ENCODE measurements at regions of chr11 and their contacts with region 1.

Region 1: GRCh38 chr11:17770048-17770652 is 35.6 kb downstream of the KCNC1 start:
- DNase-seq: peak; percentile 49
- ATAC-seq: peak; percentile 29
- H3K4me3 Mint-ChIP-seq: no peak overlapping the region
- H3K27ac Mint-ChIP-seq: peak overlapping the region; percentile 38; the same call in 1 of the 2 replicates
- H3K4me1 Mint-ChIP-seq: peaks cover 4% of the 10 kb centered on the region; the same call in 1 of the 2 replicates
- H3K27me3 Mint-ChIP-seq: no peaks in the 10 kb centered on the region
- CTCF ChIP-seq: no peak

Region 2: GRCh38 chr11:17695454-17696441 is 74.4 kb before region 1 on chr11:
- CTCF ChIA-PET with region 1: no interaction called
- POLR2A ChIA-PET with region 1: no interaction called
- DNase-seq: peak; percentile 31
- ATAC-seq: peak; percentile 77
- H3K4me3 Mint-ChIP-seq: peak overlapping the region; percentile 67
- H3K27ac Mint-ChIP-seq: no peak overlapping the region
- H3K4me1 Mint-ChIP-seq: peaks cover 4% of the 10 kb centered on the region; the same call in 1 of the 2 replicates
- H3K27me3 Mint-ChIP-seq: peaks cover 59% of the 10 kb centered on the region
- CTCF ChIP-seq: no peak

Region 3: GRCh38 chr11:17736930-17737817 is 33.0 kb before region 1 on chr11:
- CTCF ChIA-PET with region 1: interaction called, 24 read pairs
- POLR2A ChIA-PET with region 1: no interaction called
- DNase-seq: no peak
- ATAC-seq: no peak
- H3K4me3 Mint-ChIP-seq: no peak overlapping the region
- H3K27ac Mint-ChIP-seq: no peak overlapping the region
- H3K4me1 Mint-ChIP-seq: peaks cover 11% of the 10 kb centered on the region
- H3K27me3 Mint-ChIP-seq: peaks cover 24% of the 10 kb centered on the region
- CTCF ChIP-seq: no peak

Region 4: GRCh38 chr11:17781221-17781620 is 11.1 kb after region 1 on chr11:
- CTCF ChIA-PET with region 1: interaction called, 48 read pairs
- POLR2A ChIA-PET with region 1: no interaction called
- DNase-seq: no peak
- ATAC-seq: no peak; the same call in 1 of the 2 replicates
- H3K4me3 Mint-ChIP-seq: no peak overlapping the region
- H3K27ac Mint-ChIP-seq: no peak overlapping the region
- H3K4me1 Mint-ChIP-seq: no peaks in the 10 kb centered on the region
- H3K27me3 Mint-ChIP-seq: no peaks in the 10 kb centered on the region
- CTCF ChIP-seq: no peak

Region 5: GRCh38 chr11:17827006-17827405 is 56.9 kb after region 1 on chr11:
- CTCF ChIA-PET with region 1: interaction called, 44 read pairs
- POLR2A ChIA-PET with region 1: interaction called, 3 read pairs
- DNase-seq: no peak
- ATAC-seq: peak; percentile 92
- H3K4me3 Mint-ChIP-seq: no peak overlapping the region
- H3K27ac Mint-ChIP-seq: no peak overlapping the region
- H3K4me1 Mint-ChIP-seq: peaks cover 8% of the 10 kb centered on the region
- H3K27me3 Mint-ChIP-seq: no peaks in the 10 kb centered on the region; the same call in 1 of the 2 replicates
- CTCF ChIP-seq: no peak

Region 6: GRCh38 chr11:17873586-17873985 is 103.4 kb after region 1 on chr11:
- CTCF ChIA-PET with region 1: interaction called, 16 read pairs
- POLR2A ChIA-PET with region 1: no interaction called
- DNase-seq: no peak
- ATAC-seq: no peak
- H3K4me3 Mint-ChIP-seq: no peak overlapping the region
- H3K27ac Mint-ChIP-seq: no peak overlapping the region
- H3K4me1 Mint-ChIP-seq: peaks cover 12% of the 10 kb centered on the region
- H3K27me3 Mint-ChIP-seq: no peaks in the 10 kb centered on the region
- CTCF ChIP-seq: no peak

Region 7: DNA sequence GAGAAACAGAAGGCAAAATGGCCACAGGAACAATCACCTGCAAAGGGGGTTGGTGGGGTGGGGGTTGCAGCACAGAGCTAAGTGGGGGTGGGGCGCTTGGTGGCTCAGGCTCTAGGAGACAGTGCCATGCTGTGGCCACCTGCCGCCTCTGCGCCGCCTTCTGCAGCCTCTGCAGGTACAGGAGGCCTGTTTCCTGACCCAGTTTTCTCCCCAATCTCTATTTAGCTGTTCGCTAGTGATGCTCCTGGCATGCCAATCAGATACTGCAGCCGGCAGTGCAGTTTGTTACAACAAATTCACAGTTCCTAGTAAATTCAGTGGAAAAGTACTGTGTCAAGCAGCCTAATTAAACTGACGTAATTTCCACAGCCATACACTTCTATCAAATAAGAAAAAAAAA is 136.3 kb after region 1 on chr11:
- CTCF ChIA-PET with region 1: interaction called, 67 read pairs
- POLR2A ChIA-PET with region 1: interaction called, 3 read pairs
- DNase-seq: peak; percentile 87
- ATAC-seq: peak; percentile 99
- H3K4me3 Mint-ChIP-seq: no peak overlapping the region
- H3K27ac Mint-ChIP-seq: no peak overlapping the region
- H3K4me1 Mint-ChIP-seq: peaks cover 9% of the 10 kb centered on the region
- H3K27me3 Mint-ChIP-seq: no peaks in the 10 kb centered on the region
- CTCF ChIP-seq: no peak

Region 8: DNA sequence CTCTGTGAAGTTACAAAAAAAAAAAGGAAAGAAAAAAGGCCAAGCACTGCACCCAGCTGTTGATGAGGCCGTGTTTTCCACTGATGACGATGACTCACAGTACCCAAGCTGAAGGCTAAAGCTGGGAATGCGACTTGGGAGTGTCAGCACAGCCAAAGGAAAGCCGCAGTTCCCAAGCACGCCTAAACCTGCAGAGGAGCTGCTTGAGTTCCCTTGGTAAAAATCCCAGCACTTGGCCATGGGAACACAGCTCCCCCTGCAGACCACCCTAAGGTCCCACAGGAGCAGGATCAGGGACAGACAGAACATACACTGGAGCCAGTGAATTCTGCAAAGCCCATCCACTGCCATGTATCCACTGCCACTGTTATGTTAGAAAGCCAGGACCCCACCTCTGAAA is 202.8 kb after region 1 on chr11:
- CTCF ChIA-PET with region 1: interaction called, 70 read pairs
- POLR2A ChIA-PET with region 1: no interaction called
- DNase-seq: peak; percentile 79
- ATAC-seq: peak; percentile 99
- H3K4me3 Mint-ChIP-seq: no peak overlapping the region
- H3K27ac Mint-ChIP-seq: peak overlapping the region; percentile 74
- H3K4me1 Mint-ChIP-seq: 0 out of 2 replicates have a peak, but pooled peaks cover 3% of the 10 kb centered on the region
- H3K27me3 Mint-ChIP-seq: no peaks in the 10 kb centered on the region; the same call in 1 of the 2 replicates
- CTCF ChIP-seq: peak; percentile 67